Transverse colon (tissue), 4 donors: ENCODE measurements at regions of chr9 and their contacts with region 1.

Region 1: DNA sequence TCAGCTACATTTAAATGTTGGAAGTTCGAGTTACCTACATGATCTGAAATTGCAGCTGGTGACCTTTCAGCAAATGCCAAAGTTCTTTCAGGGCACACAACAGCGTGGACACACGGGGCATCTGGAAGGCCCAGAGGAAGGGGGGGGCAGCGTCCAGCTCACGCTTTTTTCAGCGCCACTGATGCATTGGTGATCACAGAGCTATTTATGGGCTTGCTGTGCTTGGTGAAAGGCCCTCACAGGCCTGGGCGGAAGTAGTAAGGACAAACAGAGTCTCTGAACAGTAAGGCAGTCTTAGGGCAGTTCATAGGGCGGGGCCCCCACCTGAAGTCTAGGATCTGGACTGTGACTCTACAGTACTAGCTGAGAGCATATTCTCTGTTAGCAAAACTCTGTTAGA is 6.6 kb upstream of the FBP2 start:
- DNase-seq: peak; percentile 64
- H3K4me3 ChIP-seq: no peak overlapping the region
- H3K27ac ChIP-seq: peak overlapping the region in 3 of 4 donors; percentile 60 to 72 (median 64)
- H3K4me1 ChIP-seq: peaks cover 15 to 36% (median 25%) of the 10 kb centered on the region in 4 donors
- H3K27me3 ChIP-seq: no peaks in the 10 kb centered on the region
- CTCF ChIP-seq: no peak
- EP300 ChIP-seq: no peak
- POLR2A ChIP-seq: no peak

Region 2: GRCh38 chr9:94108584-94108983 is 491.7 kb before region 1 on chr9:
- in situ Hi-C with region 1: no loop called
- intact Hi-C with region 1: no loop called
- DNase-seq: no peak
- H3K4me3 ChIP-seq: no peak overlapping the region
- H3K27ac ChIP-seq: no peak overlapping the region
- H3K4me1 ChIP-seq: peaks cover 0 to 3% (median 0%) of the 10 kb centered on the region in 4 donors
- H3K27me3 ChIP-seq: no peaks in the 10 kb centered on the region
- CTCF ChIP-seq: no peak
- EP300 ChIP-seq: no peak
- POLR2A ChIP-seq: no peak

Region 3: GRCh38 chr9:94534901-94535300 is 65.4 kb before region 1 on chr9:
- in situ Hi-C with region 1: no loop called
- intact Hi-C with region 1: loop called (anchors 2 kb)
- DNase-seq: no peak
- H3K4me3 ChIP-seq: no peak overlapping the region
- H3K27ac ChIP-seq: no peak overlapping the region
- H3K4me1 ChIP-seq: peaks cover 0 to 20% (median 4%) of the 10 kb centered on the region in 4 donors
- H3K27me3 ChIP-seq: no peaks in the 10 kb centered on the region
- CTCF ChIP-seq: no peak
- EP300 ChIP-seq: no peak
- POLR2A ChIP-seq: no peak

Region 4: GRCh38 chr9:94928691-94929372 is 328.6 kb after region 1 on chr9:
- in situ Hi-C with region 1: no loop called
- intact Hi-C with region 1: no loop called
- DNase-seq: no peak
- H3K4me3 ChIP-seq: no peak overlapping the region
- H3K27ac ChIP-seq: peak overlapping the region in 2 of 4 donors; percentile 10 to 31
- H3K4me1 ChIP-seq: peaks cover under 1 to 48% (median 19%) of the 10 kb centered on the region in 4 donors
- H3K27me3 ChIP-seq: no peaks in the 10 kb centered on the region
- CTCF ChIP-seq: no peak
- EP300 ChIP-seq: no peak
- POLR2A ChIP-seq: no peak

Region 5: DNA sequence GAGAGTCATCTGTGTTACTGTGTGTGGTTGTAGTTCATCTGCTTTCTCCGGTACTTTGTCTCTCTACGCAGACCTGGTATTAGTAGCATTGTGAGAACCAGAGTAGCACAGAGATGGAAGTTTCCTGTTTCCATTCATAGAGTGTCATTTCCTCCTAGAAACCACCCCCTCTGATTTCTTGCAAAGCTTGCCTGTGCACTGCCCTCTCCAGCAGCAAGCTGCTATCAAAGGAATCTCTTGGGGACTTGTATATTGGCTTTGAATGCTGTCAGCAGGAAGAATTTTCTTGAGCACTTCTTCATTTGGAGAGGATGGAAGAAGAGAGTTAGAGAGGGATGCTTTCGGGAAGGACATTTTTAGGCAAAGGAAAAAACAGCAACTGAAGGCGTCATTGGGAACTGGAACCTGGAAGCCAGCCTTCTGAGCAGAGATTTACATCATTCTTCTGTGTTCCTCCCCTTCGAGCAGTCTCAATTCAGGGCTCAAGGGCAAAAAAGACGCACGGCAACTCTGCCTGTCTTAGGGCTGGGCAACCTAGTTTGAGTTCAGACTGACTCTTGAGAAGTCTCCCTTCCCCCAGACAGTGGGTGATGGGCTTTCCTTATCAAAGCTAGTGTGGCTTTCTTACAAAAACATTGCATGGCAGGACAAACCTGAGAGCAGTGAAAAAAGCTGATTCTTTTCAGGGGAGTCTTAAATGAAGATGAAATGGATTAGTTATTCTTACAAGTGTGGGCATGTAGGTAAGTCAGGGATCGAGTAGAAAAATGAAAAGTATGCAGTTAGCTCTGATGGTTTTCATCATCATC is 352.5 kb after region 1 on chr9:
- in situ Hi-C with region 1: no loop called
- intact Hi-C with region 1: no loop called
- DNase-seq: no peak
- H3K4me3 ChIP-seq: no peak overlapping the region
- H3K27ac ChIP-seq: peak overlapping the region; percentile 3 to 56 (median 44)
- H3K4me1 ChIP-seq: peaks cover 18 to 27% (median 24%) of the 10 kb centered on the region in 4 donors
- H3K27me3 ChIP-seq: no peaks in the 10 kb centered on the region
- CTCF ChIP-seq: no peak
- EP300 ChIP-seq: no peak
- POLR2A ChIP-seq: no peak